ENCODE measurements at regions of chr2 and their contacts with region 1.

Region 1: DNA sequence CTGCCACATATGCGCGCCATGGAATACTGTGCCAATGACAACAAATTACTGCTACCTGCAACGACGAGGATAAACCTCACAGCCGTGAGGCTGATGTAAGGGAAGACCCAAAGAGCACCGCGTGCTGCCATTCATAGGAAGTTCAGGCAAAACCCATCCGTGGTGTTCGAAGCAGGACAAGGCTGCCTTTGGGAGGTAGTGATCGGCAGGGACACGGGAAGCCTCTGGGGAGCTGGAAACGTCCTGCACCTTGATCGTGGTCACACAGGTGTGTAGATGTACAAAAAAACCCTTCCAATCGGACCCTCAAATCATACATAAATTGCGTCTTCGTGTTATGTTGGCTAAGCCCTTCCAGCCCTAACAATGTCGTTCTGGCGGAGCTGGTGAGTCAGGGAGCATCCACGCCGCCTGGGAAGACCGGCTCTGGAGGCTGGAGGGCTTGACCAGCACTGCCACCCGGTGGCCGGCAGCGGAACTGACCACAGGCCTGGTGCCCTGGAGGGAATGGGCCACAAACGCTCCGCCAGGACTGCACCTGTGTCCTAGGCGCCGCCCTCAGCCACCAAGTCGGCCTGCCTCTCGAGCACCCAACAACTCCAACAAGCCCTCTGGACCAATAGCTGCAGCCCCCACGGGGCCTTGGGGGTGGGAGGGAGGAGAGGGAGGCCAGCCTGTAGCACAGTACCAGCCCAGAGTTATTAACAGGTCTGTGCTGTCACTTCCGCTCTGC is 4.1 kb upstream of the NEURL3 start:
- DNase-seq: peak; percentile 90 to 94 (median 94)
- ATAC-seq: peak; percentile 90
- H3K4me3 ChIP-seq: no peak overlapping the region
- H3K4me1 ChIP-seq: peaks cover 15% of the 10 kb centered on the region
- CTCF ChIP-seq: peak; percentile 99

Region 2: GRCh38 chr2:96396095-96396494 is 113.2 kb before region 1 on chr2:
- intact Hi-C with region 1: no loop called
- DNase-seq: no peak
- ATAC-seq: no peak
- H3K4me3 ChIP-seq: no peak overlapping the region
- H3K4me1 ChIP-seq: no peaks in the 10 kb centered on the region
- CTCF ChIP-seq: no peak

Region 3: DNA sequence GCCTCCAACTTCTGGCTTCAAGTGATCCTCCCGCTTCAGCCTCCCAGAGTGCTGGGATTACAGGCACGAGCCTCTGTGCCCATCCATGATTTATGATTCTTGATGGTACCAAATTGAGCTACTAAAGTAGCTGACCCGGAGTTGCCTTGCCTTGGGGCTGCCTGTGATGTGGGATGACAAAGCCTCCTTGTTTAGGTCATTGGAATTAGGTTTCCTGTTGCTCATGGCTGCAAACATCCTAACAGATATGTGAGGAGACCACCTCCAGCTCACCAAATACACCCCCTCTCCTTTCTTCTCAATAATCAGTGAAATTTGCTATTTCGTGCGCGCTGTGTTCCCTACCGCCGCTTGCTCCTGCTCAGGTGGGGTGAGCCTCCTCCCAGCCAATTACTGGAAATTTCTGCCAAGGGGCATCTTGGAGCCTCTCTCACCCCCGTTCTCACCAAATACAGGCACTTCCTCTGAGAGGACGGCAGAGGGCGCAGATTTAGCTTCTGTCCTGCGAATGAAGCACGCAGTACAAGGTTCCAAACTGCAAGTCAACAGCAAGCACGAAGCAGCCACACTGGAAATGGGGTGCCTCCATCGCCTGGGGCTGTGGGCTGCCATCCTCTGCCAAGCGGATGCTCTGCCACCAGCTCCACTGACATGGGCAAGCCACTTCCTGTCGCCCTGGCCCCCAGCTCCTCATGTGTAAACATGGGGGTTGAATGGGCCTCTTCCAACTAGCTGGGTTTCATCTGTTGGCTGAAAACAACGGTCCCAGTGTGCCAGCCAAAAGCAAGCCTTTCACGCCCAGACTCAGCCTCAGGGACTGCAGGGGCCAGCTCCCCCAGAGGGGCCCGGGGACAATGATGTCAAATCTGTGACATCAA is 102.0 kb before region 1 on chr2:
- intact Hi-C with region 1: loop called in 1 of 2 experiments (anchors 5 kb)
- DNase-seq: peak; percentile 60 to 66 (median 65)
- ATAC-seq: peak; percentile 73
- H3K4me3 ChIP-seq: no peak overlapping the region
- H3K4me1 ChIP-seq: peaks cover 17% of the 10 kb centered on the region
- CTCF ChIP-seq: peak; percentile 67

Region 4: GRCh38 chr2:96679848-96680247 is 170.6 kb after region 1 on chr2:
- intact Hi-C with region 1: no loop called
- DNase-seq: peak in 1 of 3 donors; percentile 10
- ATAC-seq: peak; percentile 52
- H3K4me3 ChIP-seq: no peak overlapping the region
- H3K4me1 ChIP-seq: no peaks in the 10 kb centered on the region
- CTCF ChIP-seq: no peak

Measured in mucosa of descending colon (tissue), 3 donors.